ENCODE measurements at regions of chr1 and their contacts with region 1.

Region 1: GRCh38 chr1:172745014-172745413 is 86.1 kb downstream of the FASLG start:
- DNase-seq: peak in 2 of 5 donors; percentile 44 to 52
- H3K4me3 ChIP-seq: no peak overlapping the region
- H3K4me3 Mint-ChIP-seq: peak overlapping the region in 3 of 7 donors; percentile 19 to 49 (median 33)
- H3K27ac ChIP-seq: no peak overlapping the region
- H3K27ac Mint-ChIP-seq: peak overlapping the region in 3 of 8 donors; percentile 3 to 65 (median 6)
- H3K4me1 ChIP-seq: peaks cover 24% of the 10 kb centered on the region
- H3K4me1 Mint-ChIP-seq: peaks cover 31 to 39% (median 36%) of the 10 kb centered on the region in 3 donors
- H3K27me3 ChIP-seq: no peaks in the 10 kb centered on the region
- H3K27me3 Mint-ChIP-seq: peaks cover 4 to 6% of the 10 kb centered on the region in 2 donors

Region 2: GRCh38 chr1:172638885-172639831 is 105.9 kb before region 1 on chr1:
- CTCF ChIA-PET with region 1: no interaction called
- POLR2A ChIA-PET with region 1: no interaction called
- DNase-seq: peak; percentile 36 to 79 (median 70)
- H3K4me3 ChIP-seq: peak overlapping the region; percentile 32
- H3K4me3 Mint-ChIP-seq: peak overlapping the region; percentile 7 to 85 (median 76)
- H3K27ac ChIP-seq: peak overlapping the region; percentile 29
- H3K27ac Mint-ChIP-seq: peak overlapping the region; percentile 77 to 97 (median 92)
- H3K4me1 ChIP-seq: peaks cover 70% of the 10 kb centered on the region
- H3K4me1 Mint-ChIP-seq: peaks cover 72 to 81% (median 73%) of the 10 kb centered on the region in 3 donors
- H3K27me3 ChIP-seq: no peaks in the 10 kb centered on the region
- H3K27me3 Mint-ChIP-seq: no peaks in the 10 kb centered on the region

Region 3: DNA sequence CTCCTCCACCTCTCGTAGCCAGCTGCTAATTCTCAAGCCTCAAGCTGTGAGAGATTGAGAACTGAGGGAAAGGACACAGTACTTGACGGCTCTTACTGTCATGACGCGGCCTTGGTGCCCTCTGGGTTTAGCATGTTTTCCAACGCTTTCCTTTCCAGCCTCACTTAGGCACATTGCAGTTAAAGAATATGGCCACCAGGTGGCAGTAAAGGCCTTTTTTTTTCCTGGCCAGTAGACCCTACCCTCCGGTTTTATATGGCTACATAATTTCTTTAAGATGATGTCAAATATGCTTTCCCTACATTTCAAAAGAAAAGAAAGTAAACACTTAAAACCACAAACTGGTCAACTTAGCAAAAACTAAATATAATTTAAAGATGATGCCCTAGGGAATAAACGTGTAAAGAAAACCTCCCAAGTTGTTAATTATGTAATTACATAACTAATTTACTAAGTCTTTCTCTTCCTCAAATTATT is 675.4 kb after region 1 on chr1:
- CTCF ChIA-PET with region 1: interaction called, 18 read pairs
- POLR2A ChIA-PET with region 1: no interaction called
- DNase-seq: peak; percentile 30 to 64 (median 61)
- H3K4me3 ChIP-seq: no peak overlapping the region
- H3K4me3 Mint-ChIP-seq: no peak overlapping the region
- H3K27ac ChIP-seq: no peak overlapping the region
- H3K27ac Mint-ChIP-seq: peak overlapping the region in 4 of 8 donors; percentile 11 to 66 (median 41)
- H3K4me1 ChIP-seq: no peaks in the 10 kb centered on the region
- H3K4me1 Mint-ChIP-seq: peaks cover 9 to 12% (median 10%) of the 10 kb centered on the region in 3 donors
- H3K27me3 ChIP-seq: no peaks in the 10 kb centered on the region
- H3K27me3 Mint-ChIP-seq: no peaks in the 10 kb centered on the region